ENCODE measurements at regions of chr2 and their contacts with region 1.

Region 1: DNA sequence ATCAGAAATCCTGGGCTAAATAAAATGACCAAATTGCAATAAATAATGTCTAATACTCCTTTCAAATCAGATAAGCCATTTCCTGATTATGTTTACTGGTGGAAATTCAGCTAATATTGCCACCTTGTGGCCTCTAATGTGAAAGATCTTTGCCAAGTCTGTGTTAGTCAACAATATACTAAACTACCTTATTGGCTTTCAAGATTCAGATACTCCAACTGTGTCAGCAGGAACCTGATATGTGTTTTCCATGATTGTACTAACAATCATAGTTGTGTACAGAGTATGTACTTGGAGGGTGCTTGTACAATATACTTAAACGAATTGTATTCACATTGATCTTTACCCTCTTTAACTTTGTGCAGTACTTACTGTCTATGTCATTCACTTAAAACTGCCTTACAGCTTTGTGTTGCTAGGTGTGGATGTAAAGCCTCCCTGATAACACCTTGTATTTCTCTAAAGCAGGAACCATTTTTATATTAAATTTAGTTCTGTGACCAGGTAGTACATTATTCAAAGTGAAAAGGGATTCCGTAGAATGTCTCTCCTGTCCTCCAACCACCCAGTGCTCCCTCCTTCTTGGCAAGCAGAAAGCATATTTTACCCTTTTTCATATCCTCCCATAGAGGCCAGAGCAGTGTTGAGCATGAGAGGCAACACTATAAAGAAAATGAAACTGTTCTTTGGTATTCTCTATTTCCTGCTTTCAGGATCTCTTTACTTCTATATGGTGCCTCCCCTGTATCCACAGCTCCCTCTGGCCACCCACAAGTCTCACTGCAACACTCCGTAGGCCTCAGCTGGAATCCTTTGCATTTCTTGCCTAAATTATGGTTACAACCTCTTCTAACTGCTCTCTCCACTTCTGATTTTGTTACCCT is 75.2 kb upstream of the C2orf15 start:
- DNase-seq: peak; percentile 34 to 69
- H3K4me3 ChIP-seq: no peak overlapping the region
- H3K27ac ChIP-seq: no peak overlapping the region
- H3K4me1 ChIP-seq: peaks cover 4% of the 10 kb centered on the region; the same call in 1 of the 2 replicates
- H3K27me3 ChIP-seq: no peaks in the 10 kb centered on the region
- CTCF ChIP-seq: peak; percentile 81

Region 2: DNA sequence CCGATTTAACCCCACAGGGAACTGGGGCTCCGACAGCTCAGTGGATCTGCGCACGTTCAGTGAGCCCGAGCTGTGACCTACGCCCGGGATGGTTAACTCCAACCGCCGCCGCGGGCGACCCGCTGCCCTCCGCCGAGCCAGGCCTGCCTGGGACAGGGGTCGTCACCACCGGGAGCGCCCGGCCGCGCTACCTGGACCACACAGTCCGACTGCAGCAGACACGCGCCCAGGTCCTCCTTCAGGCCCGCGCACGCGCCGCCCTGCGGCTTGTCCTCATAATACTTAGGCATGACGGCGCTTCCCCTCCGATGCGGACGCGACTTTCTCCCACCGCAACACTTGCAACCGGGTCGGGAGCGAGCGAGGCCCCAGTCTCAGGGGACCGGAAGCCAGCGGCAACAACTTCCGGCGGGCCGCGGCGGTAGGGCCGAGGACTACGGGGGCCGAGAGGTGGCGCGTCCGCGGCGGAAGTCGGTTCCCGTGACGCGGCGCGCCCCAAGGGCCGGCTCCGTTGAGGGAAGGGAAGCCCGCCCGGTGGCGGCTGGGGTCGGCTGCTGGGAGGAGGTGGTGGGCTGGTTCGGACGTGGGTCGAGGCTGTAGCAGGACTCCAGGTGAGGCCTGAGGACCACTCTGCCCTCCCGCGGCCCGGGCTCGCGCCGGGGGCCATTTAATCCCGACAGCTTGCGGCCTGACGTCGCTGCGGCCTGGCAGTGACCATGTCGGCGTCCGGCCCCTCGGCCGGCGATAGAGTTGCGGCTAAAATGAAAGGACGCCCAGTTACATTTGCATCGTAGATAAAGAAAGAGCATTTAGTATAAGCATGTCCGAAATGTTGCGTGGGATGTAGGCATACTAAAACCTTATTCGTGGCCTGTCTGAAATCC is 458.0 kb before region 1 on chr2 and contains the starts of genes COA5 and UNC50:
- CTCF ChIA-PET with region 1: no interaction called
- POLR2A ChIA-PET with region 1: no interaction called
- intact Hi-C with region 1: loop called (anchors 5 kb)
- DNase-seq: peak; percentile 83 to 91
- H3K4me3 ChIP-seq: peak within 1 kb of the TSS; percentile 77
- H3K27ac ChIP-seq: peak within 1 kb of the TSS; percentile 70
- H3K4me1 ChIP-seq: peaks cover 25% of the 10 kb centered on the region
- H3K27me3 ChIP-seq: no peaks in the 10 kb centered on the region
- CTCF ChIP-seq: peak; percentile 1
- total RNA-seq, gene COA5: 37.5 and 43.6 TPM in 2 replicates
- total RNA-seq, gene UNC50: 38.1 and 46.0 TPM in 2 replicates

Region 3: DNA sequence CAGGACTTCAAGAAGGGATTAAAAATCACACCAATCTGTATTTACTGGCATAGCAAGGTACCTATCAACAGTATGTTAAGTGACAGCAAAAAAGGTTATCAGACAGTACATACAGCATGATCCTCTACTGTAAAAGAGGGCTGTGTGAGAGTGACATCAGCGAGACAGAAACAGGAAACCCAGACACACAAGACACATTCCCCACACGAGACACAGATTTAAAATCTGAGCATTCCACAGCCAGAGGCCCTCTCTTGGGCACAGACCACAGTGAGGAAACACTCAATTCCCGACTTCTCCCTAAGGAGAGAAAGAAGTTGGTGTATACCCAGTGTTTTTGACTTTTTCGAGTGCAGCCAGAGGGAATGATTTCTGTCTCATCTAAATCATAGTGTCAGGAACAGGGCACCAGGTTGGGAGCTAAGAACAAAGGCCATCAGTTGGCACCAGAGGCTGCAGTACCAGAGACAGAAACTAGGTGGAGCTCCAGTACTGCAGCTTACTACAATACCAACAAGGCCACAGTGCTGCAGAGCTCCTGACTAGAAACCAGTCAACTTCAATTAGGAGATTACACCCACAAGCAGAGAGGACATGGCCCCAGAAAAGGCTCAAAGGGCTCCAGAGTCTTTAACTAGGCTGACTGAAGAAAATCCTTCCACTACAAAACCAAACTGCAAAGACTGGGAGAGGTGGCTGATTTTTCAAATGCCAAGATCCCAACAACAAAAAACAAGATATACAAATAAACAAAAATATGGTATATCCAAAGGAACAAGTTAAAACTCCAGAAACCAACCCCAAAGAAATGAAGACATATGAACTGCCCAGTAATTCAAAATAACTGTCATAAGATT is 417.0 kb before region 1 on chr2:
- CTCF ChIA-PET with region 1: interaction called, 14 read pairs
- POLR2A ChIA-PET with region 1: no interaction called
- intact Hi-C with region 1: loop called (anchors 1 kb)
- DNase-seq: peak; percentile 75 to 78
- H3K4me3 ChIP-seq: no peak overlapping the region
- H3K27ac ChIP-seq: no peak overlapping the region
- H3K4me1 ChIP-seq: no peaks in the 10 kb centered on the region
- H3K27me3 ChIP-seq: no peaks in the 10 kb centered on the region
- CTCF ChIP-seq: peak; percentile 100

Region 4: GRCh38 chr2:98731041-98731893 is 335.1 kb before region 1 on chr2 and contains the start of gene MGAT4A:
- CTCF ChIA-PET with region 1: no interaction called
- POLR2A ChIA-PET with region 1: no interaction called
- intact Hi-C with region 1: loop called (anchors 10 kb)
- DNase-seq: peak in 1 of 2 experiments; percentile 75
- H3K4me3 ChIP-seq: peak within 1 kb of the TSS; percentile 81
- H3K27ac ChIP-seq: no peak within 1 kb of the TSS
- H3K4me1 ChIP-seq: peaks cover 34% of the 10 kb centered on the region
- H3K27me3 ChIP-seq: no peaks in the 10 kb centered on the region
- CTCF ChIP-seq: no peak
- total RNA-seq, gene MGAT4A: 12.2 and 12.9 TPM in 2 replicates

Region 5: GRCh38 chr2:98835831-98836385 is 230.4 kb before region 1 on chr2:
- CTCF ChIA-PET with region 1: interaction called, 4 read pairs
- POLR2A ChIA-PET with region 1: no interaction called
- intact Hi-C with region 1: loop called (anchors 1 kb)
- DNase-seq: no peak
- H3K4me3 ChIP-seq: no peak overlapping the region
- H3K27ac ChIP-seq: no peak overlapping the region
- H3K4me1 ChIP-seq: peaks cover 25% of the 10 kb centered on the region
- H3K27me3 ChIP-seq: no peaks in the 10 kb centered on the region
- CTCF ChIP-seq: no peak

Region 6: DNA sequence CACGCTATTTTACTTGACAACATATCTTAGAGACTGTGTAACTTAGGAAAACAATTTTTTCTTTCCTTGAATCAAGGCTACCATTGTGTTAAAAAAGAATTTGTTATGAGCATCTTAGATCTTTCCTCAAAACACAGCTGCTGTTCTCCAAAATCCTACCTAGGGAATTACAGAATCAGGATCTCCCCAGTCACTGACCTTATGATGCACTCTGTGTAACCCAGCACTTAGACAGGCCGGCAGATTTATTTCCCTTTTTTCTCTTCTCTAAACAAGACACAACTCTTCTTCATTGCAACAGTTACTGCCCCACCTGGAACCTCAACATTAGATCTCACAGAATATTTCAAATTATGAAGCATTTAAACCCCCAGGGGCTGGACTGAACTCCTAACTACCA is 61.7 kb after region 1 on chr2:
- CTCF ChIA-PET with region 1: no interaction called
- POLR2A ChIA-PET with region 1: no interaction called
- intact Hi-C with region 1: no loop called
- DNase-seq: no peak
- H3K4me3 ChIP-seq: no peak overlapping the region
- H3K27ac ChIP-seq: no peak overlapping the region
- H3K4me1 ChIP-seq: no peaks in the 10 kb centered on the region
- H3K27me3 ChIP-seq: no peaks in the 10 kb centered on the region
- CTCF ChIP-seq: no peak

Region 7: GRCh38 chr2:99743146-99743545 is 676.8 kb after region 1 on chr2:
- CTCF ChIA-PET with region 1: no interaction called
- POLR2A ChIA-PET with region 1: no interaction called
- intact Hi-C with region 1: no loop called
- DNase-seq: no peak
- H3K4me3 ChIP-seq: no peak overlapping the region
- H3K27ac ChIP-seq: no peak overlapping the region
- H3K4me1 ChIP-seq: no peaks in the 10 kb centered on the region
- H3K27me3 ChIP-seq: peaks cover 29% of the 10 kb centered on the region
- CTCF ChIP-seq: no peak